H1 (cell line): ENCODE measurements at regions of chr2 and their contacts with region 1.

Region 1: DNA sequence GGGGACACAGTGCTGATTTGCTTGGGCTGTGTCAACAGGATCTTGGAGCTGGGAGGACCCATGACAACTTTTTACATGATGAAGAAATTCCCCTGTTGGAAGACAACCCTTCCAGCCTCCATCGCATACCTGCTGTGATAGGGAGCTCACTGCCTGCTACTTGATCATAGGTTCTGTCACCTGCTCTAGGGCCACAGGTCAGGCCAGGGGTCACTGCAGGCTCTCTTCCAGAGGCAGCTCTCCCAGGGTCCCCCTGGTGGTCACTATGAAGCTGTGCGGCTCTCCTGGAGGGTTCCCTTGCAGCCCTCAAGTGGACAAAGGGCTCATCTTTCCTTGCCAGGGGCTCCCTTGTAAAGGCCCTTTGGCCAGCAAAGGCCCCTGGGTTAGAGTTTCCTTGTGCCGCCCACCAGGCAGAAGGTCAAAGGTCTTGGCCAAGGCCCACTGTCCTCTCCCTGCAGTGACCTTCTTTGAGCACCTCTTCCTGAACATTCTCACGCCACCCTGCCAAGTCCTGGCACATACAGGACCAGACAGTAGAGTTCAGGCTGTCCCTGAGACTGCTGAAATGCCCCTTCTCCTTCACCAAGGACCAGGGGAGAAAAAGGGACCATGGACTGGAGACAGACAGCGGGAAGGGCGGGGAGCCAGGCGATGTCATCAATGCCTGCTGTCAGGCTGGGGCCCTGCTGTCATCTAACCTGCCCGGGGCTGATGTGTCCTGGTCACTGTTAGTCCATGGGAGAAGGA is 345.1 kb downstream of the DYSF start:
- DNase-seq: peak; percentile 39 to 83
- H3K4me3 ChIP-seq: no peak overlapping the region
- H3K27ac ChIP-seq: no peak overlapping the region
- H3K4me1 ChIP-seq: peaks cover 0 to 5% (median 0%) of the 10 kb centered on the region in 4 experiments; a peak in 1 of 7 replicates
- H3K27me3 ChIP-seq: no peaks in the 10 kb centered on the region
- CTCF ChIP-seq: peak; percentile 89 to 99 (median 92)
- EP300 ChIP-seq: no peak
- POLR2A ChIP-seq: no peak
- RAD21 ChIP-seq: peak; percentile 81 to 91

Region 2: DNA sequence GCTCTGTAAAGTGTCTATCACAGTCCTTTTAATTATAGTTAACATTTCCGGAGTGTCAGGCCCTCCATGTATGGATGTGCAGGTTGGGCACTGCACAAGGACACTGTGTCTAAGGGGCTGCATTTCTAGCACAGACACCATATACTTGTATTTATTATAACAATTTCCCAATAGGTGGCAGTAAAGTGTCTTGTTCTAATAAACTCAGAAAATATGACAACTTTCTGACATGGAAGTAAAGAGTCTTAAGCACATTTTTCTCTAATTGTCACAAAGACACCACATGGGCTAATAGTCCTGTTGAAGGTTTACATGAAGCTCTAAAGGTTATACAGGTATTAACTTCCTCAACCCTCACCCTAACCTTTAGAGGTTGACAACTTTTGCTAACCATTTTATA is 188.5 kb before region 1 on chr2:
- CTCF ChIA-PET with region 1: interaction called, 19 read pairs
- POLR2A ChIA-PET with region 1: no interaction called
- DNase-seq: no peak
- H3K4me3 ChIP-seq: no peak overlapping the region
- H3K27ac ChIP-seq: no peak overlapping the region
- H3K4me1 ChIP-seq: peaks cover 0 to 9% (median 5%) of the 10 kb centered on the region in 4 experiments; a peak in 3 of 7 replicates
- H3K27me3 ChIP-seq: no peaks in the 10 kb centered on the region
- CTCF ChIP-seq: no peak
- EP300 ChIP-seq: no peak
- POLR2A ChIP-seq: no peak
- RAD21 ChIP-seq: no peak; a peak in 1 of 4 replicates

Region 3: DNA sequence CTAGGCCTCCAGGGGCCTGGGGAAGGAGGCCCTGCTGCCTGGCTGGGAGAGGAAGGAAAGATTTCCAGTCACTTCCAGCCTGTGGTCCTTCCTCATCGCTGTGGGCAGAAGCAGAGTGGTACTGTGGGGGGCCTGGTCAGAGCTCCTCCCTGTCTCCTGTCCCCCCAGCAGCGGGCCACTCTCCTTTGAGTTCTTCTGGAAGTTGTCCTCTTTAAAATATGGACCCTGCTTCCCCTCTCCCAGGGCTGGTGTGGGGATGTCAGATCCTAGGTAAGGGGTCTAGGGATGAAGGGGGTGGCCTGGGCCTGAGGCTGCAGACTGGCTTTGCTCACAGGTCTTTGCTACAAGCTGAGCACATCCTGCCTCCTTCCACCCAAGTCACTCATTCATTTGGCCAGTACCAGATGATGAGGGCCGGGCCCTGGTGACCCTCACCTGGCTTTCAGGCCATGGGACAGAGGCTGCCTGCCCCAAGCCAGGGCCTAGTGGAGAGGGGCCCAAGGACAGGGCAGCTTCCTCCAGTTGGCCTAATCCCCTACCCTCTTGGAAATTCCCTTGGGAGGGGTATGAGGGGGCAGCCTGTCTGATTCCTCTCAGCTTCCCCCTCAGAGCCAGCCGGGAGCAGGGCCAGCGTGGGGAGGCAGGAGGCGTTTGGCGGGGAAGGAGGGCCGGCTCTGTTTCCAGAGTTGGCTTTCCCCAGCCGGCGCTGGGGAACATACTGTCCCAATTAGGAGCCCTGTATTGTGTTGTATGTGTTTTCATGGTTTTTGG is 113.2 kb before region 1 on chr2:
- CTCF ChIA-PET with region 1: interaction called, 11 read pairs
- POLR2A ChIA-PET with region 1: no interaction called
- DNase-seq: no peak
- H3K4me3 ChIP-seq: no peak overlapping the region
- H3K27ac ChIP-seq: no peak overlapping the region
- H3K4me1 ChIP-seq: no peaks in the 10 kb centered on the region
- H3K27me3 ChIP-seq: no peaks in the 10 kb centered on the region
- CTCF ChIP-seq: no peak
- EP300 ChIP-seq: no peak
- POLR2A ChIP-seq: no peak
- RAD21 ChIP-seq: no peak

Region 4: GRCh38 chr2:71784734-71785473 is 13.5 kb before region 1 on chr2:
- CTCF ChIA-PET with region 1: interaction called, 107 read pairs
- POLR2A ChIA-PET with region 1: no interaction called
- DNase-seq: peak in 1 of 2 experiments; percentile 35
- H3K4me3 ChIP-seq: no peak overlapping the region
- H3K27ac ChIP-seq: no peak overlapping the region
- H3K4me1 ChIP-seq: no peaks in the 10 kb centered on the region
- H3K27me3 ChIP-seq: no peaks in the 10 kb centered on the region
- CTCF ChIP-seq: no peak
- EP300 ChIP-seq: no peak
- POLR2A ChIP-seq: no peak
- RAD21 ChIP-seq: no peak

Region 5: DNA sequence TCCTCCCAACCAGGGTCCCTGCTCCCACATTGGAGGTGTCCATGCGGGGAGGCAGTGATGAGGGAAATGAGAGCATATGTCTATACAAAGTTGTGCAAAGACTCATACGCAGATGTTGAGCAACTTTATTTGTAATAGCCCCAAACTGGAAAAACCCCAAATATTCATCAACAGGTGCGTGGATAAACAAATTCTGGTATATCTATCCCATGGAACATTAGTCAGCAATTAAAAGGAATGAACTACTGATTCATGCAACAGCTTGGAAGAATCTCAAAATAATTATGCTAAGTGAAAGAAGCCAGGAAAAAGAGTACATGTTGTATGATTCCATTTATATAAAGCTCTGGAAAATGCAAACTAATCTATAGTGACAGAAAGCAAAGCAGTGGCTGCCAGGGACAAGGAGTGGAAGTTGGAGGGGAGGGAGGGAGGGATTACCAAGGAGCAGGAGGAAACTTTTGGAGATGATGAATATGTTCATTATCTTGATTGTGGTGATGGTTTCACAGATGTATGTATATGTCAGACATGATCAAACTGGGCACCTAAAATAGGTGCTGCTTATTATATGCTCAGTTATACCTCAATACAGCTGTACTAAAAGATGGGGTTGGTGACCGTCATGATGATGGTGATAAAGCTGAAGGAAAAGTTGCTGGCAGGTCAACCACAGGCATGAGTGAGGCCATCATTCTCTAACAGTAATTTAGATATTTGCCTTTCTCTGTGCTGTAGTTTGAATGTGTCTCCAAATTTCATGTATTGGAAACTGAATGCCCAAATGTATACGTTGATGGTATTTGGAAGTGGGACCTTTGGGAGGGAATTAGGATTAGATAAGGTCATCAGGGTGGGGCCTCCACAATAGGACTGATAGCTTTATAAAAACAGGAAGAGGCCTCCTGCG is 78.4 kb after region 1 on chr2:
- CTCF ChIA-PET with region 1: interaction called, 10 read pairs
- POLR2A ChIA-PET with region 1: no interaction called
- DNase-seq: no peak
- H3K4me3 ChIP-seq: no peak overlapping the region
- H3K27ac ChIP-seq: no peak overlapping the region
- H3K4me1 ChIP-seq: no peaks in the 10 kb centered on the region; a peak in 1 of 7 replicates
- H3K27me3 ChIP-seq: no peaks in the 10 kb centered on the region
- CTCF ChIP-seq: no peak
- EP300 ChIP-seq: no peak
- POLR2A ChIP-seq: no peak
- RAD21 ChIP-seq: no peak

Region 6: DNA sequence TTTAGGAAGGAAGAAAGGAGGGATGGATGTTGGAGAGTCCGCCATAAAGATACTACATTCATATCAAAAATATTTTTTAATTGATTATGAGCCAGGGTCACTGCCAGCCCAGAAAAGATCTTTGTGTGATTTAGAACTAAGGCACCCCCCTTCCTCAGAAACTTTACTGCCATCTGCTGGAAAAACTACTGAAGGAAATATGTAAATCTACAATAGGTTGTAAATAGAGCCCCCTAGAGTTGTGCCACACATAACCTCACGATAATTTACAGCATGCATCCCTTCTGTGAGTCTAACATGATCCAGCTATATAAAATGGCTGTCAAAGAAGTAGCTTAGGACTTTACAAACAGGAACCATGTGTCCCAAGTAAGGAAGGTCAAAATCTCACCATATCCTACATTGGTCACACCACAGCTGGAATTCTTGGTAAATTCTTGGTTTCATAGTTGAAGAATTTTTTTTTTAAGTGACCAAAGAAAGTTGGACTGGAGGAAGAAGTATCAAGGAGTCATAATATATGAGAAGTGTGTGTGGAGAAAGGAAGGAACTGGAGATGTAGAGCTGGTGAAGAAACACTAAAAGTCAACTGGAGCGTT is 196.7 kb after region 1 on chr2:
- CTCF ChIA-PET with region 1: interaction called, 19 read pairs
- POLR2A ChIA-PET with region 1: no interaction called
- DNase-seq: no peak
- H3K4me3 ChIP-seq: no peak overlapping the region
- H3K27ac ChIP-seq: no peak overlapping the region
- H3K4me1 ChIP-seq: peaks cover 0 to 2% (median 0%) of the 10 kb centered on the region in 4 experiments; a peak in 2 of 7 replicates
- H3K27me3 ChIP-seq: no peaks in the 10 kb centered on the region
- CTCF ChIP-seq: peak in 2 of 3 experiments; percentile 49 to 93; a peak in 3 of 4 replicates
- EP300 ChIP-seq: no peak
- POLR2A ChIP-seq: no peak
- RAD21 ChIP-seq: peak; percentile 67 to 68